Heart left ventricle (tissue), 16 donors: ENCODE measurements at regions of chr4 and their contacts with region 1.

Region 1: DNA sequence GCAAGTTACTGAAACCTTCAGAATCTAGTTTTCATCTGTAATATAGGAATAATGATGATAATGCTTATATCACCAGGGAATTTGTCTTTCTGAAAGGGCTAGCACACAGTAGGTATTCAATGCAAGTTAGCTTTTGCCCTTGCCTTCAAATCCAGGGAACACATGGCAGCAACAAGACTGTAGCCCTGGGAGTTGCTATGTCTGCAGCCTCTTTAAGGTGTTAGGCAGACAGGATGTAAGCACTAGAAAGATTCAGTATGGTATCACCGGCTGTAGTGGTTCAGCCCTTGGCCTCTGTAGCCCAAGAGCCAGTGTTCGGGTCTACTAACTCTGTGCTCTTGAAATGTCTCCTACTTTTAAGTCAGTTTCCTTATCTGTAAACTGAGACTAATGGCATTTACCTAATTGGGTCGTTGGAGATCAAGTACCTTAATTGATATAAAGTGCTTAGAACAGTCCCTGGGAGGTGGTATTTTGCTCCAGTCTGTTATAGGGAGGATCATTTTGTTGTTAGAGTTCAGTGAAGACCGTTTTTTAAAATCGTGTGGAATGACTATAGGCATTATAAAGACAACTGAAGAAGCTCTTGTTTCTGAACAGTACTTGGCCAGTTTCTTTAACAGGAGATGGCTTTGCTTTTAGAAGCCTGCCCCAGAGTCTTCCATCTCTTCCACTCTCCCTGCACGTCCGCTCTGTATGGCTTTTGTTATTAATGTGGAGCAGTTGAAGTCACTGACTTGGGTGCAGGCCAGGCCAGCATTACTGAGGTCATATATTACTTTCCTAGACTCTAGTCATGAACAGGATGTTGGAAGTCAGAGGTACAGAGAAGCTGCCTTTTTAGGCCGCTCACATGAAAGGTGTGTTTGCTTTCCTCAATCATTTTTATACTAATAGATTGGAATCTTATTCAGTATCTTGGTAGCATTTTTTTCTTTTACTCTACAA is 44.8 kb downstream of the GAB1 start:
- DNase-seq: peak; percentile 85 to 92 (median 89)
- ATAC-seq: peak; percentile 77 to 93 (median 88)
- H3K4me3 ChIP-seq: peak overlapping the region in 8 of 12 donors; percentile 2 to 31 (median 14)
- H3K27ac ChIP-seq: peak overlapping the region; percentile 59 to 87 (median 78)
- H3K4me1 ChIP-seq: peaks cover 7 to 97% (median 81%) of the 10 kb centered on the region in 12 donors
- H3K27me3 ChIP-seq: no peaks in the 10 kb centered on the region
- CTCF ChIP-seq: no peak
- POLR2A ChIP-seq: no peak

Region 2: GRCh38 chr4:143346206-143346605 is 35.2 kb before region 1 on chr4:
- intact Hi-C with region 1: loop called in 2 of 10 experiments (anchors 5 kb)
- DNase-seq: no peak
- ATAC-seq: peak in 1 of 4 donors; percentile 25
- H3K4me3 ChIP-seq: peak overlapping the region in 8 of 12 donors; percentile 6 to 51 (median 34)
- H3K27ac ChIP-seq: peak overlapping the region in 3 of 12 donors; percentile 52 to 70 (median 68)
- H3K4me1 ChIP-seq: peaks cover 3 to 64% (median 32%) of the 10 kb centered on the region in 12 donors
- H3K27me3 ChIP-seq: no peaks in the 10 kb centered on the region
- CTCF ChIP-seq: no peak
- POLR2A ChIP-seq: no peak

Region 3: DNA sequence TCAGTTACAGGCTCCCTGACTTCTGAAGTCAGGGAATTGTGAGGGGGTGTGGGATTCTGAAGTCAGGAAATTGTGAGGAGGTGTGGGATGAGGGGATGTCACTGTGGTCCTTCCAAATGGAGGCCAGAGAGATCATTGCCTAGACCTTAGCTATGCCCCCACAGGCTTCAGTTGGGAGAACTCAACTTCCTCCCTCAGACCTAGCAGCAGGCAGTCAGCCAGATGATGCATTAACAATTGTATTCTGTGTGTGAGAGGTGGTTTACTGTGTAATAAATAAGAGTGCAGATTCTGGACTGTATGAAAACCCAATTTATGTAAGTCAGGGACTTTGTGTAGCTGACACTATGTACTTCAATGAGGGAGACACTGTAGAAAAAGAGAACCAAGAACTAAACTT is 253.3 kb after region 1 on chr4:
- intact Hi-C with region 1: no loop called
- DNase-seq: no peak
- ATAC-seq: no peak
- H3K4me3 ChIP-seq: no peak overlapping the region
- H3K27ac ChIP-seq: no peak overlapping the region
- H3K4me1 ChIP-seq: no peaks in the 10 kb centered on the region
- H3K27me3 ChIP-seq: no peaks in the 10 kb centered on the region
- CTCF ChIP-seq: no peak
- POLR2A ChIP-seq: no peak